Ascending aorta (tissue), 2 donors: ENCODE measurements at regions of chr7 and their contacts with region 1.

Region 1: DNA sequence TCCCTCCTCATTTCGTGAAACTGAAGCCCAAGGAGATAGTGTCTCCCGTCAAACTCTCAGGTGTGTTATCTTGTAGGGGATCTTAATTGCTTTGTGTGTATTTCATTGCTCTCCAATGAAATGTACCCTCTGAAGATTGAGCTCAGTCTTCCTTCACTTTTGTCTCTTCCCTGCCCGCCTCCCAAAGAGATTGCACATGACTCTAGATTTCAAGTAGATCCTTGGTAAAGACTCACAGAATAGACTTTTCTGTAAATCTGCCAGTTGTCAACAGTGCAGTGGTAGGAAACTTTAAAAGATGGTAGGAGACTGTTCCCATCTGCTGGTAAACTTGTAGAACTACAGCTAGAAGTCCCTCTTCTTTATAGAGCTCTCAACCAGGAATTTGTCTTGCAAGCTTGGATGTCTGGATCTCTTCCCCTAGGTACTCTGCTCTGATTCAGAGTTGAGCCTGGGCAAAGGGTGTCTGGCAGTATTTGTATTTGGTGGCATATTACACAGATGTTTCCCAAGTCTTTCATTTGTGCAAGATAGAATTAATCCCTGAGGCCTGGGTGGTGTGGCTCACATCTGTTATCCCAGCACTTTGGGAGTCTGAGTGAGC is 9.6 kb downstream of the CCL26 start:
- DNase-seq: no peak
- H3K4me3 ChIP-seq: no peak overlapping the region
- H3K27ac ChIP-seq: no peak overlapping the region
- H3K4me1 ChIP-seq: peaks cover 0 to 2% of the 10 kb centered on the region in 2 donors
- H3K27me3 ChIP-seq: no peaks in the 10 kb centered on the region
- CTCF ChIP-seq: peak; percentile 72 to 79 (median 76)

Region 2: DNA sequence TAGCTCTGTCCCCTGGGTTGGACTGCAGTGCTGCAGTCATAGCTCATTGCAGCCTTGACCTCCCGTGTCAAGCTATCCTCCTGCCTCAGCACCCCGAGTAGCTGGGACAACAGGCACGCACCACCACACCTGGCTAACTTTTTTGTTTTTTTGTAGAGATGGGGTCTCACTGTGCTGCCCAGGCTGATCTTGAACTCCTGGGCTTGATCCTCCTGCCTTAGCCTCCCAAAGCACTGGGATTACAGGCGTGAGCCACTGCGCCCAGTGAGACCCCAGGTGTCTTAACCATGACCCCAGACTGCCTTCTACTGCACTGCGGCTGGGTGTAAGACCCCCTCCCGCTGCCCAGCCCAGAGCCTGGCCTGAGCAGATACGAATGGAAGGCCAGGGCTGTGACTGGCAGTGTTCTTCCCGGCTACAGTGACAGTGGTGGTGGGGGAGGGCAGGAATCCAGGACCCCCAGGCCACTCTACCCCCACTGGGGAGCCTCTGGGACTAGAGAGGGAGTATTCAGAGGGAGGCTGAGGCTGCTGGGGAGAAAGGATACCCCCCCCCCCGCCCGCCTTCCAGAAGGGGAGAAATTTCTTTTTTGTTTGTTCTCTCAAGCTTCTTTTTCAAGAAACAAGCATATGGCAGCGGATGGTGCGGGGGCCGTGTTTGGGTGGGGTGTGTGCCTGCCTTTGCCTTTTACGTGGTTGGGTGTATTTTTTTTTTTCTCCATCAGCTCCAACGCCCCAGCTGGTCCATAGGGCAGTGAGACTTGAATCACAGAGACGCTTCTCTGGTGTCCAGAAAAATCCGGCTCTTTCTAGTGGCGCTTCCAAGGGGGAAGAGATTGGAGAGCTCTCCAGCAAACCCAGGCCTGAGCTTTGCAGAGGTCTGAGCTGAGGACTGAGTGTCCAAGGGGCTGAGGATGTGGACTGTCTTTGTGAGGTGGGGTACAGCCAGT is 1272.1 kb before region 1 on chr7:
- intact Hi-C with region 1: no loop called
- DNase-seq: no peak
- H3K4me3 ChIP-seq: no peak overlapping the region
- H3K27ac ChIP-seq: no peak overlapping the region
- H3K4me1 ChIP-seq: no peaks in the 10 kb centered on the region
- H3K27me3 ChIP-seq: no peaks in the 10 kb centered on the region
- CTCF ChIP-seq: no peak

Region 3: DNA sequence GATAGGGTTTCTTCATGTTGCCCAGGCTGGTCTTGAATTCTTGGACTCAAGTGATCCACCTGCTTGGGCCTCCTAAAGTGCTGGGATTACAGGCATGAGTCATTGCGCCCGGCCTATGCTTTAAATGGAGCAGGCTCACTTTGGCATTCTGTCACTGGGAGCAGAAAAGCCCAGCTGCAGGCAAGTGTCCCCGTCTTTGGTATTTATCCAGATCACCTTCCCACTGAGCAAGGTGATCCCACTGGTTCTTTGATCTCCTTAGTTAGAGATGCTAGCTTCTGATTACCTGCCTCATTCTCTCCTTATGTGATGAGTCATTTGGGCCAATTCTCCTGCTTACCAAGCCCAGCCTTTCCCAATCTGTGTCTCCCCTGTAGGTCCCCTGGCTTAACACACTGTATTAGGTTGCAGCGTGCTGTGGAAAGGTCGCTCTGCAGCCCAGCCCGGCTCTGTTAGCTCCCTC is 231.0 kb before region 1 on chr7:
- intact Hi-C with region 1: loop called (anchors 10 kb)
- DNase-seq: no peak
- H3K4me3 ChIP-seq: no peak overlapping the region
- H3K27ac ChIP-seq: no peak overlapping the region
- H3K4me1 ChIP-seq: peaks cover 3 to 7% of the 10 kb centered on the region in 2 donors
- H3K27me3 ChIP-seq: no peaks in the 10 kb centered on the region
- CTCF ChIP-seq: no peak

Region 4: GRCh38 chr7:75599244-75599781 is 163.1 kb before region 1 on chr7:
- intact Hi-C with region 1: loop called (anchors 5 kb)
- DNase-seq: no peak
- H3K4me3 ChIP-seq: no peak overlapping the region
- H3K27ac ChIP-seq: peak overlapping the region; percentile 59 to 63
- H3K4me1 ChIP-seq: peaks cover 4 to 11% of the 10 kb centered on the region in 2 donors
- H3K27me3 ChIP-seq: no peaks in the 10 kb centered on the region
- CTCF ChIP-seq: peak in 1 of 3 experiments; percentile 12

Region 5: GRCh38 chr7:75611548-75612178 is 150.8 kb before region 1 on chr7:
- intact Hi-C with region 1: loop called (anchors 1 kb)
- DNase-seq: peak; percentile 54 to 91
- H3K4me3 ChIP-seq: peak overlapping the region; percentile 42
- H3K27ac ChIP-seq: peak overlapping the region; percentile 68 to 83
- H3K4me1 ChIP-seq: peaks cover 0 to 12% of the 10 kb centered on the region in 2 donors
- H3K27me3 ChIP-seq: no peaks in the 10 kb centered on the region
- CTCF ChIP-seq: peak in 1 of 3 experiments; percentile 8